Activated T-helper 1 cell treated with anti-CD3 and anti-CD28 coated beads, Interleukin-12 subunit alpha, Interleukin-12 subunit beta, Interleukin-2, Interleukin-4 antibody, amounts not matched to agents 30 ng/mL and 10 ng/mL and 1 ng/mL, durations not matched to agents 14 hours and 24 hours and 36 hours (primary cell): ENCODE measurements at regions of chr2 and their contacts with region 1.

Region 1: GRCh38 chr2:237154082-237154638 is 68.5 kb downstream of the COPS8 start:
- DNase-seq: peak; percentile 30
- H3K4me3 Mint-ChIP-seq: no peak overlapping the region
- H3K27ac Mint-ChIP-seq: peak overlapping the region; percentile 94
- H3K4me1 Mint-ChIP-seq: peaks cover 42% of the 10 kb centered on the region
- H3K27me3 Mint-ChIP-seq: no peaks in the 10 kb centered on the region

Region 2: GRCh38 chr2:237122214-237122666 is 31.9 kb before region 1 on chr2:
- intact Hi-C with region 1: loop called (anchors 1 kb)
- DNase-seq: peak; percentile 11
- H3K4me3 Mint-ChIP-seq: no peak overlapping the region
- H3K27ac Mint-ChIP-seq: no peak overlapping the region
- H3K4me1 Mint-ChIP-seq: no peaks in the 10 kb centered on the region
- H3K27me3 Mint-ChIP-seq: peaks cover 4% of the 10 kb centered on the region

Region 3: DNA sequence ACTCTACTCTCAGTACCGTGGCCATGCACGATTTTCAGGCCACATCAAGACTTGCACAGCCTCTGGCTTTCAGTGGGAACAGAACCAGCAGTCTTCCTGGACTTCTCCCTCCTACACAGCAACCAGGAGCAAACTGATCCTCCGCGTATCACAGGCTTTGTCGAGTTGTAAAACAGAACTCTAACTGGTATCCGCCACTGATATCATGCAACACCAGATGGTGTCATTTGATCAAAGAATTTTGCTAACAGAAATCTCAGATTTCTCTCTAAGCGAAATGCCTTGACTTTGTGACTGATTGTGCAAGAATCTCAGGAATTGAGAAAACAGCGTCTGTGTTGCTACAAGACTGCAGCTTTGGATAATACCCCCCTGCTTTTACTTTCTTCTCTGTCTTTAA is 17.2 kb after region 1 on chr2:
- intact Hi-C with region 1: no loop called
- DNase-seq: no peak
- H3K4me3 Mint-ChIP-seq: no peak overlapping the region
- H3K27ac Mint-ChIP-seq: no peak overlapping the region
- H3K4me1 Mint-ChIP-seq: no peaks in the 10 kb centered on the region
- H3K27me3 Mint-ChIP-seq: peaks cover 15% of the 10 kb centered on the region

Region 4: GRCh38 chr2:237322564-237322963 is 168.4 kb after region 1 on chr2:
- intact Hi-C with region 1: loop called (anchors 1 kb)
- DNase-seq: no peak
- H3K4me3 Mint-ChIP-seq: no peak overlapping the region
- H3K27ac Mint-ChIP-seq: no peak overlapping the region
- H3K4me1 Mint-ChIP-seq: no peaks in the 10 kb centered on the region
- H3K27me3 Mint-ChIP-seq: no peaks in the 10 kb centered on the region

Region 5: DNA sequence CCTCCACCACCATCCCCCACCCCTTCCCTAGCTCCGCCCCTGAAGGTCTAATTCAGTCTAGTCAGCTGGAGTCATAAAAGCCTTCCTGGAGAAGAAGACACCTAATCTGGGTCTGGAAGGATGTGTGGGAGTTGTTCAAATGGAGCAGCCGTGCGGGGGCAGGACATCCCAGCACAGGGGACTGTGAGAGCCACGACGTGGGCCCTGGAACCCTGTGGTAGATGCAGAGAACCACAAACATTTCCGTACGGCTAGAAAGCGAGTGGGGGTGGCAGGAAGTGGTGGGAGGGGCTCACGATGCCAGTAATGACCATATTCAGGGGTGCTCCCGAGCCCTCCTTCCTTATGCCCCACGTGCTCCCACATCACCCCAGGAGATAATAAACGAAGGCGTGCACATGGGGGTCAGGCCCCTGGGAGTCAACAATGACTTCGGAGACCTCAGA is 280.7 kb after region 1 on chr2:
- intact Hi-C with region 1: loop called (anchors 1 kb)
- DNase-seq: peak; percentile 62
- H3K4me3 Mint-ChIP-seq: peak overlapping the region; percentile 82
- H3K27ac Mint-ChIP-seq: peak overlapping the region; percentile 91
- H3K4me1 Mint-ChIP-seq: peaks cover 91% of the 10 kb centered on the region
- H3K27me3 Mint-ChIP-seq: peaks cover 5% of the 10 kb centered on the region

Region 6: DNA sequence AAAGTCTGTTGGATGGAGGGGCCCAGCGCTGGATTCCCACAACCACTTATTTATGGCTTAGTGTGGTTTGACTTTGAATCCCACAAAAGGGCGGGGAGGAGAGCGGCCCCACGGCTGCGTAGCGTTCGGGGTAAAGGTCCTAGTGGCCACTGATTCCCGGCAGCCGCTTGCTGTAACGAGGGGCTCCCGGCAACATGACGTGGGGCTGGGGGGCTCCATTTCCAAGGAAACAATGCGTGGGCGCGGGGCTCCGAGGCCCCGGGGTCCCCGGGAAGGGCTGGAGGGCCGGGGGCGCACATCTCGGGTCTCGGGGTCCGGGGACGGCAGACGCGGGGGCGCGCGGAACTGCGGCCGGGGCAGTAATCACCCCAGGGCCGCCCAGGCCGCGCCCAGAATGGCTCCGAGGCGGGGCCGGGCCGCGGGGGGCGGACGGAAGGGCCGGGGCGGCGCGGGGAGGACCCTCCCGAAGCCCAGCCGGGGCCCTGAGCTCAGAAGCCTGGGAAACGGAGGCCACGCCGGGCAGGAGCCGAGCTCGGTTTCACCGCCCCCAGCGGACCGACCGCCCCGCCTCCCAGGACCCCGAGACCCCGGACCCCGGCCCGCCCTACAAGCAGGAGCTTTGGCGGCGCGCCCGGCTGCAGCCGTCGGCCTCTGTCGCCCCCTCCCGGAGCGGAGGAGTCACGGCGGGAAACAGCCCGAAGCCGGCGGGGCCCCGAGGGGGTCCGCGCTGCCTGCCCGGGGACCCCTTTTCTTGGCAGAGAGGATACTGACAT is 321.0 kb after region 1 on chr2:
- intact Hi-C with region 1: loop called (anchors 1 kb)
- DNase-seq: peak; percentile 67
- H3K4me3 Mint-ChIP-seq: peak overlapping the region; percentile 83
- H3K27ac Mint-ChIP-seq: peak overlapping the region; percentile 87
- H3K4me1 Mint-ChIP-seq: peaks cover 12% of the 10 kb centered on the region
- H3K27me3 Mint-ChIP-seq: peaks cover 20% of the 10 kb centered on the region

Region 7: GRCh38 chr2:237572021-237572741 is 418.0 kb after region 1 on chr2:
- intact Hi-C with region 1: loop called (anchors 1 kb)
- DNase-seq: peak; percentile 72
- H3K4me3 Mint-ChIP-seq: no peak overlapping the region
- H3K27ac Mint-ChIP-seq: no peak overlapping the region
- H3K4me1 Mint-ChIP-seq: peaks cover 7% of the 10 kb centered on the region
- H3K27me3 Mint-ChIP-seq: peaks cover 7% of the 10 kb centered on the region

Region 8: GRCh38 chr2:237744613-237745249 is 590.6 kb after region 1 on chr2:
- intact Hi-C with region 1: loop called (anchors 1 kb)
- DNase-seq: peak; percentile 62
- H3K4me3 Mint-ChIP-seq: no peak overlapping the region
- H3K27ac Mint-ChIP-seq: peak overlapping the region; percentile 85
- H3K4me1 Mint-ChIP-seq: peaks cover 33% of the 10 kb centered on the region
- H3K27me3 Mint-ChIP-seq: no peaks in the 10 kb centered on the region